Heart left ventricle (tissue), 16 donors: ENCODE measurements at regions of chr16 and their contacts with region 1.

Region 1: DNA sequence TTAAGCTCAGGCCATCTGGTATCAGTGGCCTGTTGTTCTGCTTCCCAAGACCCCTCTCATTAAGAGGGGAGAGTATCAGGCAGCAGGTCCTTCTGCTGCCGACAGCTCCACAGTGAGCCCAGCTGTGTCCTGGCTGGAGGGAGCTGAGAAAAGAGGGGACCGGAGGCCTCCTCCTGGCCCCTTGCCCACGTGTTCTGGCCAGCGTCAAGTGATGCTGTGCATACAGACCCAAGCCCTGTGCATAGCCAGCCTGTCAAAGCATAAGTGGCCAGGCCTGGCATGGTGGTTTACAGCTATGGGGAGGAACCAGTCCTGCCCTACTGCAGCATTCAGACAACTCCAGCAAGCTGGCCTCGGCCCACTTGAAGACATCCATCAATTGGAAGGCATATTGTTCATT is 48.0 kb downstream of the ABCC6 start:
- DNase-seq: peak; percentile 29 to 69 (median 63)
- ATAC-seq: peak; percentile 72 to 93 (median 92)
- H3K4me3 ChIP-seq: no peak overlapping the region
- H3K27ac ChIP-seq: peak overlapping the region in 1 of 12 donors; percentile 29
- H3K4me1 ChIP-seq: peaks cover 0 to 6% (median 0%) of the 10 kb centered on the region in 12 donors
- H3K27me3 ChIP-seq: no peaks in the 10 kb centered on the region
- CTCF ChIP-seq: no peak
- POLR2A ChIP-seq: no peak

Region 2: DNA sequence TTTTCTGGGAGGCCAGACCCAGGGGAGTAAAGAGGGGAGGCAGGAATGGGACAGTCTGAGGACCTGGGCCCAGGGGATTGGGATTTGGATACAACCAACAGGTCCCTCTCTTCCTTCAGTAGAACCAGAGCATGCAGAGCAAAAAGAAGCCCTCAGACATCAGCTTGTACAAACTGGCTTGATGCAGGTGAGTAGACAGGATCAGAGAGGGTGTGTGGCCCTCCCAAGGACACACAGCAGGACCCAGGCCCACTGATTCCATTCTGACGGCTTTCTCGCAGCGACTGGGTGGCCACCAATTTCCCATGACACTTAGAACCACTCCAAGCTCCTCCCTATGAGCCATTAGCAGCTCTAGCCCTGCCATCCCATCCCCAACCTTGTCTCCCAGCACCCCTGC is 15.6 kb before region 1 on chr16:
- intact Hi-C with region 1: loop called in 1 of 10 experiments (anchors 2 kb)
- DNase-seq: peak in 1 of 5 donors; percentile 7
- ATAC-seq: no peak
- H3K4me3 ChIP-seq: no peak overlapping the region
- H3K27ac ChIP-seq: no peak overlapping the region
- H3K4me1 ChIP-seq: no peaks in the 10 kb centered on the region
- H3K27me3 ChIP-seq: no peaks in the 10 kb centered on the region
- CTCF ChIP-seq: no peak
- POLR2A ChIP-seq: no peak